CD4-positive, alpha-beta memory T cell (primary cell): ENCODE measurements at regions of chr12 and their contacts with region 1.

Region 1: DNA sequence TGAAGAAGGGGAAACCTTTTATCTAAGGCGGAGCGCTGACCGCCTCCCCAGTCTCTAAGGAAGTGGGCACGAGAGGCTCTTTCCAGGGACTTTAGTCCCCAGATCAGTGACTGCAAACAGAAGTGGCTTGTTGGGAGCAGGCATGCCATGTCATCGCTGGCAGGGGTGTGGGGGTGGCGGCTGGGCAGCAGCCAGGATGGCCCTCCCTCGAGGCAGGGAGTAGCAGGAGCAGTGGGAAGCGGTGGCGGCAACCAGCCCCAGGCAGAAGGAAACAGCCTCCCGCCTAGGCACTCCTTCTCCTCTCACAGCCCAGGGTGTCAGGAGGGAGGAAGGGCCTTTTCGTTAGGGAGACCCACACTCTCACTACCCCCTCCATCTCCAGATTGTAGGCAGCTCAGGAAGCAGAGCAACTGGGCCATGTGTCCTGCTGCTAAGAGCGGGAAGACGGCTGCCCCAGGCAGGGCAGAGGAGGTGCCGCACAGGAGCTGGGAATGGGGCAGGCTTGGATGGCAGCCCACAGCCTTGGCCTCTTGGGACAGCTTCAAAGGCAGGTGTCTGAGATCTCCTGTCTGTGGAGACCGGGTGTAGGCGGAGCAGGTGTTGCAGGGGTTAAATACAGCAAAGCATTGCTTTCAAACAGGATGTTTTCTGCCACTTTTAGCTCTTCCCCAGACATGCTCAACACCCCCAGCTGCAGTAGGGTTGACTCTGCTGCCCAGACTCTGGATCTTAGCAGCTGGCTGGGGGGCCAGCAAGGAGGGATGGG is 21.8 kb downstream of the VDR start:
- DNase-seq: peak in 3 of 5 donors; percentile 28 to 38 (median 37)
- H3K4me3 ChIP-seq: peak overlapping the region; percentile 48 to 50
- H3K4me3 Mint-ChIP-seq: peak overlapping the region; percentile 83 to 95 (median 88)
- H3K27ac ChIP-seq: peak overlapping the region; percentile 29
- H3K27ac Mint-ChIP-seq: peak overlapping the region in 6 of 7 donors; percentile 67 to 97 (median 92)
- H3K4me1 ChIP-seq: peaks cover 42% of the 10 kb centered on the region
- H3K4me1 Mint-ChIP-seq: peaks cover 27 to 59% (median 46%) of the 10 kb centered on the region in 4 donors
- H3K27me3 ChIP-seq: no peaks in the 10 kb centered on the region
- H3K27me3 Mint-ChIP-seq: no peaks in the 10 kb centered on the region

Region 2: DNA sequence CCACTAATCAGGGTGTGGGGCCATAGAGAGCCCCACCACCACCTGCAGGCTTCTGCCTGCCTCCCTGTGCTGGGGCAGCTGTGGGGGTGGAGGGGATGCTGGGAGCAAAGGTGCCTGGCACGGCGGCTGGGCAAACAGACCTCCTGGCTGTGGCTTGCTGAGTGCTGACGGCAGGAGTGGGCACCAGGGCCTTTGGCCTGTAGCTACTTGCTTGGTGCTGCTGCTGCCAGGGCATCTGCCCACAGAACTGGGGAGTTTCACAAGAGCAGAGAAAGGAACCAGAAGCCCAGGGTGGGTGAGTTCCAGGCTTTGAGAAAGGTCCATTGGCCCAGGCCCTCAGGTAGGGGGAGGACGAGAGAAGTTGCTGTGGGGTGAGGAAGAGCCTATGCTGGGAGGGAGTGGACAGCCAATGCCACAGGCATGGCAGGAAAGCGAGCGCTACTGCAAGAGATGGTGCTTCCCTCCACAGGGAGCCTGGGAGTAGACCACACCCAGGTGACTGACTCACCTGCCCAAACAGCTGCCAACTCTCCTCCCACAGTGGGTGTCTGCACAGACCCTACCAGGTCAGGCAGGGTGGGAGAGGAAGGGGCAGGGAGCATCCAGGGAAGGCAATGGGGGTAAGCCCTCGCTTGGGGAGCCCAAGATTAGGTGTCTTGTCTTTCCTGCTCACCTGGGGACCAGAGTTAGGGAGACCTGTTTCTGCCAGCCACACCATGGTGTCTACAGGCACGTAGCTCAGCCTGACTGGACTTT is 24.3 kb before region 1 on chr12:
- CTCF ChIA-PET with region 1: no interaction called
- POLR2A ChIA-PET with region 1: no interaction called
- intact Hi-C with region 1: no loop called
- DNase-seq: no peak
- H3K4me3 ChIP-seq: no peak overlapping the region
- H3K4me3 Mint-ChIP-seq: no peak overlapping the region
- H3K27ac ChIP-seq: no peak overlapping the region
- H3K27ac Mint-ChIP-seq: no peak overlapping the region
- H3K4me1 ChIP-seq: no peaks in the 10 kb centered on the region
- H3K4me1 Mint-ChIP-seq: peaks cover 0 to 2% (median 1%) of the 10 kb centered on the region in 4 donors
- H3K27me3 ChIP-seq: no peaks in the 10 kb centered on the region
- H3K27me3 Mint-ChIP-seq: no peaks in the 10 kb centered on the region

Region 3: DNA sequence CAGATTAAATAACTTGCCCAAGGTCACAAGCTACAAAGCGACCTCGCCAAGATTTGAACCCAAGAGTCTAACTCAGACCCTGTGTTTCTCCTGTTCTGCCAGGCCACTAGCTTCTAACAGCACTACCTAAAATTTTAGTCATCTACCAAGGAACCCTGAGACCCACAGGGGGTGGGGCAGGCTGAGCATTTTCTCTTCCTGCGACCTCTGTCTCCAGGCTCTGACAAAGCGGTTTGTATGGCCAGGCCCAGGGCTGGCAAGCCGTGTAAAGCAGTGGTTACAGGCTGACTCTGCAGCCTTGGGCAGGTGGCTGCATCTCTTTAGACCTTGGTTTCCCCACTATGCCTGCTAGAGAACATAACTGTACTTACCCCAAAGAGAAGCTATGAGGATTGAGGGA is 16.5 kb after region 1 on chr12:
- CTCF ChIA-PET with region 1: interaction called, 18 read pairs
- POLR2A ChIA-PET with region 1: interaction called, 40 read pairs
- intact Hi-C with region 1: loop called (anchors 2 kb)
- DNase-seq: no peak
- H3K4me3 ChIP-seq: no peak overlapping the region
- H3K4me3 Mint-ChIP-seq: peak overlapping the region in 1 of 8 donors; percentile 16
- H3K27ac ChIP-seq: no peak overlapping the region
- H3K27ac Mint-ChIP-seq: no peak overlapping the region
- H3K4me1 ChIP-seq: peaks cover 59% of the 10 kb centered on the region
- H3K4me1 Mint-ChIP-seq: peaks cover 30 to 64% (median 50%) of the 10 kb centered on the region in 4 donors
- H3K27me3 ChIP-seq: no peaks in the 10 kb centered on the region
- H3K27me3 Mint-ChIP-seq: peaks cover 1 to 2% of the 10 kb centered on the region in 2 donors

Region 4: DNA sequence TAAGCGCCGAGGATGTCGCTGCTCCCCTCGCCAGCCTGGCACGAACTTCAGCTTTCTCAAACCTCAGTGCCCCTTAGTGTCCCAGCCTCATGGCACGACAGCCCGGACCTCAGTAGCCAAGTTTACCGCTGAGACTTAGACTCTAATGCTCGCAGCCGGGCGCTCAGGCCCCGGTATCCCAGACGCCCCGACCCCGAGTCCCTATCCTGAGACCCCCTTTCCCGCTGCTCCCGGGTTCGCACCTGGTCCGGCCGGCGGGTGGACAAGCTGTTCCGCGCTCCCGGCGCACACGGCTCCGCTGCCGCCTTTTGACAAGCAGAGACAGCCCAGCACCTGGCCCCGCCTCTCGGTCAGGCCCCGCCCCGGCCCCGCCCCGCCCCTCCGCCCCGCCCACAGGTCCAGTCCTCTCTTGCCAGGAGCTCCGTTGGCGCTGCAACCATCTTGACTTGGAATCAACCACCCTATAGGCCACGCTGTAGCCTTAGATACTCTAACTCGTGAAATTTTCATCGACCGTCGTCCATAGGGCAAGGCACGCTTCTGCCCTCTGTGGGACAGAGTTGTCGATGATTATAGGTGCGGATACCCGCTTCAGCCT is 21.8 kb after region 1 on chr12 and contains the start of gene VDR:
- CTCF ChIA-PET with region 1: interaction called, 18 read pairs
- POLR2A ChIA-PET with region 1: interaction called, 40 read pairs
- intact Hi-C with region 1: loop called (anchors 2 kb)
- DNase-seq: peak; percentile 62 to 79 (median 67)
- H3K4me3 ChIP-seq: peak within 1 kb of the TSS; percentile 78 to 86
- H3K4me3 Mint-ChIP-seq: peak within 1 kb of the TSS; percentile 86 to 97 (median 90)
- H3K27ac ChIP-seq: peak within 1 kb of the TSS; percentile 36
- H3K27ac Mint-ChIP-seq: peak within 1 kb of the TSS; percentile 20 to 94 (median 74)
- H3K4me1 ChIP-seq: peaks cover 52% of the 10 kb centered on the region
- H3K4me1 Mint-ChIP-seq: peaks cover 29 to 67% (median 48%) of the 10 kb centered on the region in 4 donors
- H3K27me3 ChIP-seq: no peaks in the 10 kb centered on the region
- H3K27me3 Mint-ChIP-seq: peaks cover 0 to 1% of the 10 kb centered on the region in 2 donors
- total RNA-seq, gene VDR: 1.6 to 3.2 TPM

Region 5: DNA sequence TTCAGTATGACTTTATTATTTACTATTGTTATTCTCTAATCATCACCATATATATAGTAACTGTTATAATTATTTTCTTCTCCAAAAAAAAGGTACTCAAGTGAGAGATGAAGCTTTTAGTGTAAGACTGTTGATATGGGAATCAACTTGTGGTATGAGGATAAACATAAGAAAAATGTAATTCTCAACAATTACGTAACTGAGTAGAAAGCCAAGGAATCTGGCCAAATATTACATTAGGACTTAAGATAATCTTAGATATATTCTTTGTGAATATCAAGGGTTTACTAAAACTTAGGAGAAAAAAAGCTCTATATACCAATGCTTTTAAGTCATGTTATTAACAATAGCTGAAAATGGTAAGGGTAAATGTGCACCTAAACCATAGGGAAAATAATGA is 209.6 kb after region 1 on chr12:
- CTCF ChIA-PET with region 1: no interaction called
- POLR2A ChIA-PET with region 1: no interaction called
- intact Hi-C with region 1: no loop called
- DNase-seq: no peak
- H3K4me3 ChIP-seq: no peak overlapping the region
- H3K4me3 Mint-ChIP-seq: no peak overlapping the region
- H3K27ac ChIP-seq: no peak overlapping the region
- H3K27ac Mint-ChIP-seq: no peak overlapping the region
- H3K4me1 ChIP-seq: no peaks in the 10 kb centered on the region
- H3K4me1 Mint-ChIP-seq: peaks cover 0 to 4% (median 3%) of the 10 kb centered on the region in 4 donors
- H3K27me3 ChIP-seq: no peaks in the 10 kb centered on the region
- H3K27me3 Mint-ChIP-seq: no peaks in the 10 kb centered on the region